Activated T-helper 1 cell treated with anti-CD3 and anti-CD28 coated beads, Interleukin-12 subunit alpha, Interleukin-12 subunit beta, Interleukin-2, Interleukin-4 antibody, amounts not matched to agents 30 ng/mL and 10 ng/mL and 1 ng/mL, durations not matched to agents 14 hours and 24 hours and 36 hours (primary cell): ENCODE measurements at regions of chr20 and their contacts with region 1.

Region 1: DNA sequence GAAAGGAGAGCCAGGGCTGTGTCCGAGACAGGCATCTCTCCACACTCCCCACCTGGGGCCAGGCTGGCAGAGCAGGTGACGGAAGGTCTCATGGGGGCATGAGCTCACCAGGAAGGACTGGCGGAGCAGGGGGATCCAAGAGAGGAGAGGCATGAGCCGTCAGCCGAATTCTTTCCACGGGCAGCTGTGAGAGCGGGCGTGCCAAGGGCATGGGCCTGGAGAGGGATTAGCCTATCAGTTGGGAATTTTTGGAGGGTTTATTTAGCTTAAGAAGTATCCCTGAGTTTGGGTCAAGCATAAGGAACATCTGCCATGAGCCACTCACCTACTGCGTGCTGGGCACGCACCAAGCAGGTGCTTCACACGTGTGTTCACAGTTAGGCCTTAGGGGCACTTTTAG is 60.2 kb upstream of the ZNFX1 start:
- DNase-seq: no peak
- H3K4me3 Mint-ChIP-seq: no peak overlapping the region
- H3K27ac Mint-ChIP-seq: no peak overlapping the region
- H3K4me1 Mint-ChIP-seq: no peaks in the 10 kb centered on the region
- H3K27me3 Mint-ChIP-seq: peaks cover 12% of the 10 kb centered on the region

Region 2: GRCh38 chr20:49446808-49447207 is 108.7 kb after region 1 on chr20:
- intact Hi-C with region 1: no loop called
- DNase-seq: no peak
- H3K4me3 Mint-ChIP-seq: no peak overlapping the region
- H3K27ac Mint-ChIP-seq: no peak overlapping the region
- H3K4me1 Mint-ChIP-seq: no peaks in the 10 kb centered on the region
- H3K27me3 Mint-ChIP-seq: peaks cover 23% of the 10 kb centered on the region

Region 3: GRCh38 chr20:49484180-49485140 is 146.4 kb after region 1 on chr20:
- intact Hi-C with region 1: loop called (anchors 1 kb)
- DNase-seq: peak; percentile 67
- H3K4me3 Mint-ChIP-seq: peak overlapping the region; percentile 85
- H3K27ac Mint-ChIP-seq: peak overlapping the region; percentile 66
- H3K4me1 Mint-ChIP-seq: peaks cover 9% of the 10 kb centered on the region
- H3K27me3 Mint-ChIP-seq: peaks cover 48% of the 10 kb centered on the region

Region 4: DNA sequence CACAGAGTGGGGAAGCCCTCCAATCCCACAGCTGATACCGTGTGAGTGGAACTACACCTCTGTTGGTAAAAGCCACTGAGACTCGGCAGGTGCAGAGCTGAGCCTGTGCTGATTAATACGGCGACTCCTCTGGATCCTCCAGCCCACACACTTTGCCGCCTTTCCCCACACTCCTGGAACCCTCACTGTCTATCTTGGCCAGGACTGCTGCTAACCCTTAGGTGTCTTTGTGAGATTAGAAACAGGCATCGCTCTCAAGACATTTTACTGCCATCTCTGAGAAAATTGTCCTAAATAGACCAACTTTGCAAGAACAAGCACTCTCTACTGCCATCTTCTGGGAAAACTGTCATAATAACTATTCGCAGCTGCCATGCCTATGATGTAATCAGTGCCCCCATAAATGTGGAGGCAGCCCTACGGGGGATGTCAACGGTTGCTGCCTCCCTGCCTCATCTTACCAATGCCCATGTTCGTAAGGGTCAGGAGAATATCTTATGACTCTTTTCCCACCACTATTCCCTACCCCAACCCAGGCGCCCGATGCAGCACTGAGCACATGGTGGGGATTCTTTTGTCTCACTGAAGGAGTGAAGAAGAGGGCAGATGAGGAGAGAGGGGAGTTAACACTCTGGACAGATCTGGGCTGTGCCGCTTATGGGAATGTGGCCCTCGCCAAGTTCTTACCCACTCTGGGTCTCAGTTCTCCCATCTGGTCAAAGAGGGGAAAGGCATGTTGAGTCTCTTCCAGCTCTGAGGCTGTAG is 170.6 kb after region 1 on chr20:
- intact Hi-C with region 1: loop called (anchors 1 kb)
- DNase-seq: no peak
- H3K4me3 Mint-ChIP-seq: no peak overlapping the region
- H3K27ac Mint-ChIP-seq: no peak overlapping the region
- H3K4me1 Mint-ChIP-seq: no peaks in the 10 kb centered on the region
- H3K27me3 Mint-ChIP-seq: peaks cover 36% of the 10 kb centered on the region

Region 5: GRCh38 chr20:49928401-49929141 is 590.5 kb after region 1 on chr20:
- intact Hi-C with region 1: loop called (anchors 1 kb)
- DNase-seq: peak; percentile 69
- H3K4me3 Mint-ChIP-seq: no peak overlapping the region
- H3K27ac Mint-ChIP-seq: peak overlapping the region; percentile 36
- H3K4me1 Mint-ChIP-seq: peaks cover 11% of the 10 kb centered on the region
- H3K27me3 Mint-ChIP-seq: peaks cover 11% of the 10 kb centered on the region